Ascending aorta (tissue), 2 donors: ENCODE measurements at regions of chr6 and their contacts with region 1.

Region 1: DNA sequence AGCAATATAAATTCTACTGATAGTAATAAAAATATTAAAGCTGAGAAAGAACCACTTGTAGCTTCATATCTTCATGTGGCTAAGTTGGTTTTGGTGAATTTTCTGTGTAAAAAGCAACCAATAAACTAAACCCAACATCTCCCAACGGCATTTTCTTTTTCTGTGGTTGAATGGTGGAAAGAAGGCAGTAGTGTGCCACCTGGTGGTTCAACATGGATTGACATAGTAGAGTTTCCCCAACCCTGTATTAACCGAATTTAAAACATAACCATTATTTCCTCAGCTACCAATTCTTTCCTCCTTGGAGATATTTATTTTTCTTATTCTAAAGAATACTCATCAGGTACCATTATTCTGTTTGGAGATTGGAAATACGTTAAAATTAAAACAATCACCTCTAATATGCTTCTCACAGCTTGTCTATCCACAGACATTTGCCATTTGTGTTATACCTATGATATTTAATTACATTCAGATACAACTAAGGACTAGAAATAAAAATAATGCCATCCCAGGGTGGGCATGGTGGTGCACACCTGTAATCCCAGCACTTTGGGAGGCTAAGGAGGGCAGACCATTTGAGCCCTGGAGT is 117.1 kb upstream of the EEF1E1 start:
- DNase-seq: peak in 1 of 2 donors; percentile 70
- H3K4me3 ChIP-seq: peak overlapping the region in 1 of 2 donors; percentile 18
- H3K27ac ChIP-seq: no peak overlapping the region
- H3K4me1 ChIP-seq: peaks cover 0 to 2% of the 10 kb centered on the region in 2 donors
- H3K27me3 ChIP-seq: no peaks in the 10 kb centered on the region
- CTCF ChIP-seq: peak; percentile 34 to 76 (median 67)

Region 2: GRCh38 chr6:8131256-8131897 is 88.1 kb before region 1 on chr6:
- intact Hi-C with region 1: loop called (anchors 1 kb)
- DNase-seq: peak in 1 of 2 donors; percentile 69
- H3K4me3 ChIP-seq: no peak overlapping the region
- H3K27ac ChIP-seq: no peak overlapping the region
- H3K4me1 ChIP-seq: no peaks in the 10 kb centered on the region
- H3K27me3 ChIP-seq: no peaks in the 10 kb centered on the region
- CTCF ChIP-seq: peak; percentile 55 to 67 (median 61)

Region 3: DNA sequence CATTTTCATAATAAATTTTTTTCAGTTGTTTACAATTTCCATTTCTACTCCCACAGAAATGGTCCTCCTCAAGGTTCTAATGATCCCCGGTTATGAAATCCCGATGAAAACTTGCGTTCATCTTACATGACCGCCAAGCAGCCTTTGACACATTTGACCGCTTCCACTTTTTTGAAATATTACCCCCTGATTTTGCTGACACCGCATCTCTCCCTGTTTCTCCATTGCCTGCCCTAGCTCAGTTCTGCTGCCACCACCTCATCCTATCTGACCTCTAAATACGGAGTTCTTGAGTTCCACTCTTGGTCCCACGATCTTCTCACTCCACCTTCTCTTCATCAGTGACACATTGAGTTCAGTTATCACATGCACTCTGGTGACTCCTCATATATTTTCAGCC is 141.8 kb after region 1 on chr6:
- intact Hi-C with region 1: no loop called
- DNase-seq: no peak
- H3K4me3 ChIP-seq: no peak overlapping the region
- H3K27ac ChIP-seq: no peak overlapping the region
- H3K4me1 ChIP-seq: no peaks in the 10 kb centered on the region
- H3K27me3 ChIP-seq: no peaks in the 10 kb centered on the region
- CTCF ChIP-seq: no peak